ENCODE measurements at regions of chr11 and their contacts with region 1.

Region 1: DNA sequence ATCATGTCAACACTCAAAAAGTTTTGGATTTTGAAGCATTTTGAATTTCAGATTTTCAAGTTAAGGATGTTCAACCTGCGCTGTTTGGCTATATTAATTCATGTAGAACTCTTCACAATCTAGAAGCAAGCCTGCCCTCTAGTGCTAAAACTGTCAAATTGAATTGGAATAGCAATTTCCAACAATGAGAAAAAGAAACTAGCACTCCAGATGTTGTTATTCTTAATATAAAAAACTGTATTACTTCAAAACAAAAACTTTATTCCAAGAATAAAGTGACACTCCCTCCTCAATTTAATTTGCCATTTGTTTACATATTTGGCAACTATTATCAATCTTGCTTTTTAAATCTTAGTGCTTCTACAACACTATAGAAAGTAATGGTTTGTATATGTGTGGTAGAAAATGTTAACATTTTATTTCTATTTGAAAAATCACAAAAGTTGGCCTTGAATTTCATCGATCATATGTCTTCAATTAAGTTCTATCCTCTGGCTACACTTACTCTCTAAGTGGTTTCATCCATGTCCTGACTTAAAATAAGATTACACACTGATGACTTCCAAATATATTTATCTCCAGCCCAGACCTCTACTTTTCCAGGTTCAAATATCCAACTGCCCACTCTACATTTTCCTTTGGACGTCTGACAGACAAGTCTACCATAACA is 36.6 kb downstream of the DCUN1D5 start:
- DNase-seq: no peak
- H3K4me3 ChIP-seq: no peak overlapping the region
- H3K27ac ChIP-seq: no peak overlapping the region
- H3K4me1 ChIP-seq: no peaks in the 10 kb centered on the region
- H3K27me3 ChIP-seq: no peaks in the 10 kb centered on the region
- CTCF ChIP-seq: peak; percentile 85

Region 2: DNA sequence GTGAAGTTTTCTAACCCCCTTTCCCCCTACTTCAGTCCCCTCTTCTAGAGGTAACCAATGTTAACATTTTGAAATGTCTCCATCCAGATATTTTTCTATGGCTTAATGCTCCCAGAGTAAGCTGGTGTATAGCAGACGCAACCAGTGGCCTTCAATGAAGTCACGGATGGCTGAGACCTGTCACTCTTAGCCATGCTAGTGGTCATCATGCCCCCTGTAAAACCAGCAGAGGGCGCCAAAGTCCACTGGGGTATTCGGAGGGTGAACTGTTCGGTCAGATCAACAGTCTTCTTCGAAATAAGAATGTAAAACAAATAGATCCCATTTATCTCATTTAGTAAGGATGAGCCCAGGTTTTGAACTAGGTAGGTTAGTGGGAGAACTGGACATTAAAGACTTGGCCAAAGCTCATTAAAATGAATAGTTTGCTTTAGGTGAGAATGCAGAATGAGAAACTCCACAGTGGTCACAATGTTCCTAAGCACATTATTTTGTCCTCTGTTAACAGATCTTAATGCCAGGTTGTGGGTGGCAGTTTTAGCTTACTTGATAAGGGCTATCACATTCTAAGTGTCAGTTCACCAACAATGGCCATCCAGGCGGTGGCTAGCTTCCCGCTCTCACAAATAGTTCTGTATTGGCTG is 322.0 kb before region 1 on chr11:
- CTCF ChIA-PET with region 1: no interaction called
- POLR2A ChIA-PET with region 1: no interaction called
- intact Hi-C with region 1: loop called (anchors 1 kb)
- DNase-seq: peak; percentile 50 to 74
- H3K4me3 ChIP-seq: no peak overlapping the region
- H3K27ac ChIP-seq: no peak overlapping the region
- H3K4me1 ChIP-seq: no peaks in the 10 kb centered on the region
- H3K27me3 ChIP-seq: no peaks in the 10 kb centered on the region; the same call in 1 of the 2 replicates
- CTCF ChIP-seq: peak; percentile 98

Region 3: GRCh38 chr11:102914238-102915043 is 140.9 kb before region 1 on chr11:
- CTCF ChIA-PET with region 1: interaction called, 4 read pairs
- POLR2A ChIA-PET with region 1: no interaction called
- intact Hi-C with region 1: loop called (anchors 2 kb)
- DNase-seq: peak in 1 of 2 experiments; percentile 5
- H3K4me3 ChIP-seq: no peak overlapping the region
- H3K27ac ChIP-seq: no peak overlapping the region
- H3K4me1 ChIP-seq: peaks cover 24% of the 10 kb centered on the region
- H3K27me3 ChIP-seq: no peaks in the 10 kb centered on the region
- CTCF ChIP-seq: peak; percentile 78

Region 4: GRCh38 chr11:103862094-103862801 is 806.9 kb after region 1 on chr11:
- CTCF ChIA-PET with region 1: no interaction called
- POLR2A ChIA-PET with region 1: no interaction called
- intact Hi-C with region 1: no loop called
- DNase-seq: no peak
- H3K4me3 ChIP-seq: no peak overlapping the region
- H3K27ac ChIP-seq: no peak overlapping the region
- H3K4me1 ChIP-seq: no peaks in the 10 kb centered on the region
- H3K27me3 ChIP-seq: no peaks in the 10 kb centered on the region
- CTCF ChIP-seq: no peak